K562 (cell line): ENCODE measurements at regions of chrX and their contacts with region 1.

Region 1: DNA sequence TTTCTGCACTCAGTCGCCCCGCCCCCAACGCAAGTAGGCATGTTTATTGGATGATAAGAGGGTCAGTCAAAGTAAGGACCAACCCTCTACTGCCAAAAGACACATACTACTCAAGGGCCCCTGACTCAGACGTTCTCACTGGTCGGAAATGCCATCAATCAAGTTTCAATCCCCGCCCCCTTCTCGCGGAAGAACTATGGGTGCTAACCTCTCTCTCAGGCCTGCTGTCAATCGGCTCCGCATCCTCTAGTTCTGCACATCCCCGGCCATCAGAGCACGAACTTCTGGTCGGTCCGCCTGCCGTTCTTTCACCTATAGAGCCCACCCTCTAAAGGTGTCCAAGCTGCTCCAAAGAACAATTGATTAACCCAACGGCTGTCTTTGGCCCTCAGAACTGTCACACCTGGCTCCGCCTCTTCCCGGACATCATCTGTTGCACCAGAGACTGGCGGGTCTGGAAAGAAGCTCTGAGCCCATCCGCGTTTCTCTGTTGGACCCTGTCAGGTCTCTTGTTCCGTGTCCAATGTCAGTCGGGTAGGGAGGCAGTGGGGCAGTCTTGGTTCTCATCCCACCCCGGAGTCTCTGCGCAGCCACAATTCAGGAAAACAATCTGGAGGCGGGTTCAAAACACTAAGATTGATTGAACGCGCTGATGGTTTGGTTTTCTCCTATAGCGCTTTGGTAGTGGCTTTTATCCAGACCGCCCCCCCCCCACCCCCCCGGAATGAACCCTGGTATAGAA is 15.2 kb downstream of the NDUFB11 start:
- DNase-seq: peak; percentile 90 to 94 (median 90)
- ATAC-seq: peak; percentile 99
- H3K4me3 ChIP-seq: peak overlapping the region; percentile 62
- H3K27ac ChIP-seq: peak overlapping the region; percentile 63
- H3K4me1 ChIP-seq: peaks cover 0 to 3% of the 10 kb centered on the region in 2 experiments; a peak in 1 of 5 replicates
- H3K27me3 ChIP-seq: no peaks in the 10 kb centered on the region
- CTCF ChIP-seq: no peak
- EP300 ChIP-seq: no peak
- POLR2A ChIP-seq: peak; percentile 51; the same call in 1 of the 2 replicates
- RAD21 ChIP-seq: no peak

Region 2: GRCh38 chrX:46953597-46953996 is 175.7 kb before region 1 on chrX:
- CTCF ChIA-PET with region 1: no interaction called
- POLR2A ChIA-PET with region 1: no interaction called
- in situ Hi-C with region 1: no loop called
- intact Hi-C with region 1: no loop called
- DNase-seq: no peak
- ATAC-seq: no peak
- H3K4me3 ChIP-seq: no peak overlapping the region
- H3K27ac ChIP-seq: no peak overlapping the region
- H3K4me1 ChIP-seq: no peaks in the 10 kb centered on the region; a peak in 1 of 5 replicates
- H3K27me3 ChIP-seq: no peaks in the 10 kb centered on the region
- CTCF ChIP-seq: no peak
- EP300 ChIP-seq: no peak
- POLR2A ChIP-seq: no peak
- RAD21 ChIP-seq: no peak

Region 3: DNA sequence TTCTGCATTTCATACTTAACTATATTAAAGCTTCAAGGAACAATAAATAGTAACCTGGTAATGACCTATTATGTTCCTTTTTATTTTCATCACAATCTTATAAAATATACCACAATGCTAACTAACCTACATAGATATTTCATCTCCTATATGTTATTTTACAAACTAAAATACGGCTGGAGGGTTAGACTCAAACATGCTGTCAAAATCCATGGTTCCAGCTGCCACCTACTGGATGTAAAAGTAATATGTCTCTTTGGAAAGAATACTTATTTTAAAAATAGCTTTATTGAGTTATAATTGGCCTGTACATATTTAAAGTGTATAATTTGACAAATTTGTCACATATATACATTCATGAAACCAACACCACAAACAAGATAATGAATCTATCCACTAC is 36.1 kb before region 1 on chrX:
- CTCF ChIA-PET with region 1: no interaction called
- POLR2A ChIA-PET with region 1: no interaction called
- in situ Hi-C with region 1: no loop called
- intact Hi-C with region 1: no loop called
- DNase-seq: peak in 3 of 4 experiments; percentile 12 to 38 (median 20)
- ATAC-seq: peak; percentile 56; the same call in 2 of the 3 replicates
- H3K4me3 ChIP-seq: no peak overlapping the region
- H3K27ac ChIP-seq: no peak overlapping the region
- H3K4me1 ChIP-seq: no peaks in the 10 kb centered on the region
- H3K27me3 ChIP-seq: no peaks in the 10 kb centered on the region
- CTCF ChIP-seq: peak; percentile 28 to 67 (median 43); a peak in 4 of 6 replicates
- EP300 ChIP-seq: no peak
- POLR2A ChIP-seq: no peak
- RAD21 ChIP-seq: peak; percentile 67 to 76

Region 4: GRCh38 chrX:47112316-47112954 is 16.9 kb before region 1 on chrX:
- CTCF ChIA-PET with region 1: no interaction called
- POLR2A ChIA-PET with region 1: interaction called, 10 read pairs
- in situ Hi-C with region 1: no loop called
- intact Hi-C with region 1: no loop called
- DNase-seq: peak in 1 of 4 experiments; percentile 6
- ATAC-seq: peak; percentile 33; the same call in 2 of the 3 replicates
- H3K4me3 ChIP-seq: no peak overlapping the region
- H3K27ac ChIP-seq: no peak overlapping the region
- H3K4me1 ChIP-seq: no peaks in the 10 kb centered on the region
- H3K27me3 ChIP-seq: no peaks in the 10 kb centered on the region
- CTCF ChIP-seq: peak in 1 of 3 experiments; percentile 12; a peak in 1 of 6 replicates
- EP300 ChIP-seq: no peak
- POLR2A ChIP-seq: no peak
- RAD21 ChIP-seq: peak in 1 of 2 experiments; percentile 6; a peak in 1 of 4 replicates

Region 5: GRCh38 chrX:47144626-47145394 is 15.5 kb after region 1 on chrX and contains the starts of genes NDUFB11 and RBM10:
- CTCF ChIA-PET with region 1: no interaction called
- POLR2A ChIA-PET with region 1: interaction called, 19 read pairs
- in situ Hi-C with region 1: no loop called
- intact Hi-C with region 1: loop called (anchors 2 kb)
- DNase-seq: peak; percentile 87 to 96 (median 92)
- ATAC-seq: peak; percentile 98
- H3K4me3 ChIP-seq: peak within 1 kb of the TSS; percentile 91
- H3K27ac ChIP-seq: peak within 1 kb of the TSS; percentile 89
- H3K4me1 ChIP-seq: peaks cover 8 to 16% of the 10 kb centered on the region in 2 experiments; a peak in 3 of 5 replicates
- H3K27me3 ChIP-seq: no peaks in the 10 kb centered on the region
- CTCF ChIP-seq: peak; percentile 66 to 80 (median 69)
- EP300 ChIP-seq: no peak
- POLR2A ChIP-seq: peak; percentile 88
- RAD21 ChIP-seq: no peak
- polyA plus RNA-seq, gene NDUFB11: 20.9 to 48.3 TPM
- polyA plus RNA-seq, gene RBM10: 1.1 to 1.7 TPM